PC-3 (cell line): ENCODE measurements at regions of chr17 and their contacts with region 1.

Region 1: DNA sequence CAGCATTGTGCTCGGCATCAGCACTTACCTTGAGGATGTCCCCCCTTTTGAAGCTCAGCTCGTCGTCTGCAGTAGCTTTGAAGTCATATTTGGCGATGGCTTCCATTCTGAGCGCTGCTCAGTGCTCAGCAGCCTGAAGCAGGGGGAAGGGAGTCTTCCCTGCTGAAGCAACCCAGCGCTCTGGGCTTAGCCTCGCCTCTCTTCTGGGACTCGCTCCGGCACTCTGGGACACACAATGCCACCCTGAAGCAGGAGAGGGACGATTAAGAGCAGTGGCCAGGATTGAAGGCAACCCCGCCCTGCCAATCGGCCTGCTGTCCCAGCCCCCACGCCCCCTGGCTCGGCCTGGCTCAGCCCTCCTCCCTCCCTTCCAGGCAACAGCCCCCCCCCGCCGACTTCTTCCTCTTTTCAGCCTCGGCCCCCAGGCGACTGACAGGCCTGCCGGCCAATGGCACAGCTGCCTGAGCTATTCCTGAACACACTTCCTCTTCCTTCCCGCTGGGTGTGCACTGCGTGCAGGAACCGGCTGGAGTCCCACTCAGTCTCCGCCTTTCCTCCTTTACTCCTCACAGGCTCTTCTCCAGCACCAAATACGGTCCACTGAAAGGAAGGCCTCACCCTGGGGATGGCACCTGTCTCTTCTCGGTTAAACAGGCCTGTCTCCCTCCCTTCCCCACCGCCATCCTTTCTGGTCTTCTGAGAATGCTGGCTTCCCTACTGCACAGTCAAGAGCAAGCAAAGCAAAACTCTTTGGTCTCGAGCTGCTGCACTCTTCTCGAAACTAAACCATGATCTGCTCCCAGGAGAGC is 11.8 kb downstream of the GRB2 start:
- DNase-seq: peak; percentile 99
- ATAC-seq: peak; percentile 98
- H3K4me3 ChIP-seq: peak overlapping the region; percentile 81
- H3K27ac ChIP-seq: peak overlapping the region; percentile 57
- H3K4me1 ChIP-seq: peaks cover 30% of the 10 kb centered on the region
- H3K27me3 ChIP-seq: no peaks in the 10 kb centered on the region
- CTCF ChIP-seq: no peak

Region 2: DNA sequence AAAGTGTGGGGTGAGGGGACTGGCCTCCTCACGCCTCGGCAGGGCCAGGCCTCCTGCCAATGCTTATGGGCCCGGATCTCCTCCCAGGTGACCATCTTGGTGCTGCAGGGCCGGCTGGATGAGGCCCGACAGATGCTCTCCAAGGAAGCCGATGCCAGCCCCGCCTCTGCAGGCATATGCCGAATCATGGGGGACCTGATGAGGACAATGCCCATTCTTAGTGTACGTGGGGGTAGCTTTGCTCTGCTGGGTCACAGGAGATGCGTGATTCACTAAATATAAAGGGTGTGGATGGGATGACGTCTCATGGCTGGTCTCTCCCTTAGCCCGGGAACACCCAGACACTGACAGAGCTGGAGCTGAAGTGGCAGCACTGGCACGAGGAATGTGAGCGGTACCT is 168.7 kb before region 1 on chr17:
- CTCF ChIA-PET with region 1: no interaction called
- POLR2A ChIA-PET with region 1: interaction called, 28 read pairs
- intact Hi-C with region 1: no loop called
- DNase-seq: no peak
- ATAC-seq: no peak; the same call in 1 of the 2 replicates
- H3K4me3 ChIP-seq: no peak overlapping the region
- H3K27ac ChIP-seq: no peak overlapping the region
- H3K4me1 ChIP-seq: no peaks in the 10 kb centered on the region
- H3K27me3 ChIP-seq: no peaks in the 10 kb centered on the region
- CTCF ChIP-seq: no peak

Region 3: DNA sequence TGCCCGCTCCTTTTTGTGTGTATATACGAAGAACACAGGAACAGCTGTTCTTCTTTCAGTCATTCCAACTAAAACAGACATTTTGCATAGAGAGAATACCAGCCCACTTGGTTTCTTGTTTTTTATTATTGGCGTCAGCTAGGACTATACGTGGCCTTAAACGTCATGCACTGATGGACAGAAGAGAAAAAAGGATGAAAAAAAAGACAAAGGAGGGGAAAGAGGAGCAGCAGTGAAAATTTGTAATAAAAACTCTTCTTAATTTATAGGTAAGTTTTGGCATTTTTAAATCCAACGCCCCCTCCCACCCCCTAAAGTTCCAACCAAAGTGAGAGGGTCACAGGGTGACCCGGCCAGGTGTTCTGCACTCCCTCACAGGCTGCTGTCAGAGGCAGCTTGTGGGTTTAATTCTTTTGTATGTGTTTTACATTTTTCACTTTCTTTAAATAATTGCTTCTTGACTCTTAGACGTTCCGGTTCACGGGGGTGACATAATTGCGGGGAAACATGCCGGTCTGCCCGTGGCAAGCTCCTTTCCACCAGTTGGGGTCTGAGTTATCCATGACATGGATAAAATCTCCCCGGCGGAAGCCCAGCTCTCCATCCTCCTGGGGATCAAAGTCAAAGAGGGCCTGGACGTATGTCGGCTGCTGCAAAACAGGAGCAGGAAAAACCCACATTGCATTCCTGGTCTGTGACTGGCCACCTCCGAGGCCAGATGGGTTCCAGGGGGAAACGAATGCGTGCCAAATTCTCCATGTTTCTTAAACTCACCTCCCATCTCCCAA is 73.6 kb before region 1 on chr17:
- CTCF ChIA-PET with region 1: interaction called, 12 read pairs
- POLR2A ChIA-PET with region 1: no interaction called
- intact Hi-C with region 1: loop called (anchors 2 kb)
- DNase-seq: no peak
- ATAC-seq: no peak
- H3K4me3 ChIP-seq: no peak overlapping the region
- H3K27ac ChIP-seq: no peak overlapping the region
- H3K4me1 ChIP-seq: no peaks in the 10 kb centered on the region
- H3K27me3 ChIP-seq: no peaks in the 10 kb centered on the region
- CTCF ChIP-seq: no peak

Region 4: DNA sequence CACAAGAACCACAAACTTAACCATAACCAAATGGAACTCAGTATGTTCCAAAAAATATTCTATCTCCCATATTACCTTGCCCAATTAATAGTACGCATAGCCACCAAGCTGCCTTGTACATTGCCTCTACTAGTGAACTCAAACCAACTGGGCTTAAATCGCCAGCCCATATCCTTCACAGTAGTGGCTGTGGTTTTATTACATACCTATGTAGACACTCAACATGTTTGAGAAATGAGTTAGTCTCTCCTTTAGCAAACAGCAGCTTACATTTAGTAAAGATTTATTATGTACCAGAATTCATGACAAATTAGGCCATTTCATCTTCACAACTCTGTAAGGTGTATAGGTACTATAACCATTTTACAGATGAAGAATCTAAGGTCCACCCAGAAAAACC is 29.6 kb before region 1 on chr17:
- CTCF ChIA-PET with region 1: no interaction called
- POLR2A ChIA-PET with region 1: interaction called, 4 read pairs
- intact Hi-C with region 1: loop called (anchors 1 kb)
- DNase-seq: peak; percentile 94
- ATAC-seq: peak; percentile 89
- H3K4me3 ChIP-seq: peak overlapping the region; percentile 8; the same call in 1 of the 2 replicates
- H3K27ac ChIP-seq: peak overlapping the region; percentile 45
- H3K4me1 ChIP-seq: peaks cover 73% of the 10 kb centered on the region
- H3K27me3 ChIP-seq: no peaks in the 10 kb centered on the region
- CTCF ChIP-seq: no peak

Region 5: DNA sequence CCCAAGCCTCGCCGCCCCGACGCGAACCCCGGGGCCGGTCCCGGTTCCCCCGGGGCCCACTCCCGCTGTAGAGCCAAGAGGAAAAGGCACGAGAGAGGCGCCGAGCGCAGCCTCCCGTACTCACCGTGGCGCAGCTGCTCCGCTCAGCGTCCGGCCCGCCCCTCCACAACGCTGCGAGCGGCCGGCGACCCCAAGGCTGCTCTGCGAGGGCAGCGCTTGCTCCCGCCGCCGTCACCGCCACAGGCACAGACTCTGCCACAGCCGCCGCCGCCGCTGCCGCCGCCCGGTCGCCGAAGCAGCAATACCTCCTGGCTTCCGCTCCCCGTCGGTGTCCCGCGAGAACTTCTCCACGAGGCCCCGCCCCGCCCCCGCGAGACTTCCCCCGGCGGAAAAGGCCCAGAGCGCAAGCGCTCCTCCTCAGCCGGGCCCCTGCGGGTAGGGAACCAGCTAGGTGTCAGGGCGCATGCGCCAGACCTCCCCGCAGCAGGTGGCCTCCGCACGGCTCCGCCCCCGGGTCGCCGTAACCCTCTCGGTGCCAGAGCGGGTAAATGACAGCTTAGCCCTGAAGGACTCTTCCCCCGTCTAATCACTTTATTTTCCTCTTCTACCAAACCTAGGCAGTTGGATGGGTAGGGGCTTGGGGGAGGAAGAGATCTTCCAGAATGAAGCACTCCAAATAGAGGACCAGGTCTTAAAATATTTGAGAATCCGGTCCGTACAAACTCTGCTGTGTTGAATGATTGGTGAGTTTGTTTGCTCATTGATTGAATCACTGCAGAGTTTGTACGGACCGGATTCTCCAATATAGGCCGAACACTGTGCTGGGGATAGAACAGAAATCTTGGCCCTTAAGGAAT is 11.9 kb after region 1 on chr17 and contains the start of gene GRB2:
- CTCF ChIA-PET with region 1: interaction called, 6 read pairs
- POLR2A ChIA-PET with region 1: interaction called, 3 read pairs
- intact Hi-C with region 1: loop called (anchors 1 kb)
- DNase-seq: peak; percentile 99
- ATAC-seq: peak; percentile 81
- H3K4me3 ChIP-seq: peak within 1 kb of the TSS; percentile 96
- H3K27ac ChIP-seq: peak within 1 kb of the TSS; percentile 12
- H3K4me1 ChIP-seq: peaks cover 14% of the 10 kb centered on the region
- H3K27me3 ChIP-seq: no peaks in the 10 kb centered on the region
- CTCF ChIP-seq: no peak
- total RNA-seq, gene GRB2: 224 and 282 TPM in 2 replicates

Region 6: GRCh38 chr17:76240461-76241203 is 846.9 kb after region 1 on chr17 and contains the start of gene RNF157:
- CTCF ChIA-PET with region 1: no interaction called
- POLR2A ChIA-PET with region 1: no interaction called
- intact Hi-C with region 1: no loop called
- DNase-seq: peak; percentile 71
- ATAC-seq: peak; percentile 90
- H3K4me3 ChIP-seq: peak within 1 kb of the TSS; percentile 75
- H3K27ac ChIP-seq: no peak within 1 kb of the TSS
- H3K4me1 ChIP-seq: peaks cover 16% of the 10 kb centered on the region; the same call in 1 of the 2 replicates
- H3K27me3 ChIP-seq: no peaks in the 10 kb centered on the region
- CTCF ChIP-seq: no peak
- total RNA-seq, gene RNF157: 7.3 and 7.4 TPM in 2 replicates